Right ventricle myocardium superior (tissue), 1 donor: ENCODE measurements at regions of chr18 and their contacts with region 1.

Region 1: GRCh38 chr18:21134898-21135297 is 23.3 kb upstream of the ROCK1 start:
- DNase-seq: no peak
- ATAC-seq: no peak

Region 2: DNA sequence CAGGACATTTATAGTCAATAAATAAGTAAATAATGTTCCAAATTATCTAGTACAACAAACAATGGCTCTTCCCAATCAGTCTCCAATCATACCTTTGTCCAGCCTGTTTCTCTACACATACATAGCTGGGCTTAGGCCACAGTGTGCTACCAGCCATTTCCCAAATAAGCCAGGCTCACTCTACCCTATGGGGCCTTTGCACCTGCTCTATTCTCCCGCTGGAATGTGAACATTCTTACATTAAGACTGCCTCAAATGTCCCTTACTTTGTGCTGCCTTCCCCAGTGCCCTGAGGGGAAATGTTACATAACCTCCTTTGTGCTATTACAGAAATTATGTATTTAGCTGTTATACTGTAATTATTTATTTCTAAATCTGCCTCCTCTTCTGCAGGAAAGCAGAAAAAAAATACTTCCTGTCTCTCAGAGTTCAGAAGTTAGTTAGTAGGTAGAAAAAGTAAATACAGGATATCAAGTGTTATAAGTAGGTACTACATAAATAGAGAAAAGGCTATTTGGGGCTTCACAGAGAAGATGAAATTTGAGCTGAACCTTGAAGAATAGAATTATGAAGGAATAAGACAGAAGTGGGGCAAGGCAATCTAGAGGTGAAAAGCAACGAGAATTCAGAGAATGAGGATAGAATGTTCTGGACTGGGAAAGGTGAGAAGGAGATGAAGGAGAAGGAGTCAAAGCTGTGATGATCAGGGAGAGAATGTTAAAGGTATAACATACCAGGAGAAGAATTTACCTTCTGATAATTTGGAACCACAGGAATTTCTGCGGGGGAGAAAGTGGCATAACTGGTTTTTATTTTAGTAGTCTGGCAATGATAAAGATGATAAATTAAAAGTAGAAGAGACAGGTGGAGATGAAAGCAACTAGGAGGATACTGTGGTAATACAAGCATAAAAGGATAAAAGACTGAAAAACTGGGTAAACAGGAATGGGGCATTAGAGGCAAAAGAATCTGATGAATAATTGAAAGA is 60.3 kb before region 1 on chr18:
- intact Hi-C with region 1: loop called (anchors 10 kb)
- DNase-seq: no peak
- ATAC-seq: no peak

Region 3: GRCh38 chr18:21230436-21230835 is 95.5 kb after region 1 on chr18:
- intact Hi-C with region 1: no loop called
- DNase-seq: no peak
- ATAC-seq: no peak